ENCODE measurements at regions of chr13 and their contacts with region 1.

Region 1: DNA sequence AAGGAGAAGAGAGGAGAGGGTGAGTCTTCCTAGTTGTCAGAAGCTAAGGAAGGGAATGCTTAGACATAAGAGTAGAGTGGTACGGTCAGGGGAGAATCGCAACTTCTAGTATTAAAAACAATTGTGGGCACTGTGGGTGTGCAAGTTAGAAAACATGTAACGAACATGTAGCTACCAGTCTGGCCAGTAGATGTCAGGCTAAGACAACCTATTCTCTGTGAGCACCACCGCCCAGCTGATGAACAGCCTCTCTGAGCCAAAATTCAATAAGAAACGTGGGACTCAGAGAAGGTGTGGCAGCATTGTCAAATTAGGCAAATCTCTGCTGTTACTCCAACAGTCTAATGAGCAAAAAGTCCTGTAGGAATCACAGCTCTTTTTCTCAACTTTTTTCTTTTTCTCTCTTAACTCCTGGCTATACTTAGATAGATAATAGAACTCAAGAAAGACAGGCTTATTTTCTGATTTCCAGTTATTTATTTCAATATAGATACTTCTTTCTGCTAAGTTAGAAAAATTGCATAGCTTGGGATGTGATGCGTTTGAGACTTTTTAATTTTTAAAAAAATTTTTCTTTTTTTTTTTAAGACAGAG is 186.2 kb downstream of the USP12 start:
- DNase-seq: no peak
- H3K4me3 ChIP-seq: no peak overlapping the region
- H3K27ac ChIP-seq: no peak overlapping the region
- H3K4me1 ChIP-seq: peaks cover 0 to 26% (median 4%) of the 10 kb centered on the region in 6 donors
- H3K27me3 ChIP-seq: peaks cover 0 to 16% (median 0%) of the 10 kb centered on the region in 7 donors
- CTCF ChIP-seq: peak; percentile 57 to 93 (median 82)
- POLR2A ChIP-seq: no peak

Region 2: DNA sequence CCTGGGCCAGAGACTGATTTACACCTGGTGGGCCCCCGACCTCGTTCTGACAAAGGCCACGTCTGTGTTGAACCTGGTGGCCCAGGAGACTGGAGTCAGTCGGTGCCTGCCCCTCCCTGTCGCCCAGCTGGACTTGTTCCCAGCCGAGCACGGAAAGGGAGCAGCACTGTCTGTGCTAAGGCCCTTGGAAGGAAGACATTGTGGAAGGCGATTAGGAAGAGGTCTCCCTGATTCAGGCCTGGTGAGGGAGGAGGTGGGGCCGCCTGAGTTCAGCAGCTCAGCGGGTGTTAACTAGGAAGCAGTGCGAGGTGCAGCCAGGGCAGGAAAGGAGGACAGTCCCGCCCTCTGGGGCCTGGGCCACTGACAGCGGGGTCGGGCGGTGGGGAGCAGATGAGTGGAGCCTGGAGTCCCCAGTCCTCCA is 289.5 kb before region 1 on chr13:
- intact Hi-C with region 1: no loop called
- DNase-seq: no peak
- H3K4me3 ChIP-seq: no peak overlapping the region
- H3K27ac ChIP-seq: no peak overlapping the region
- H3K4me1 ChIP-seq: peaks cover 0 to 7% (median 6%) of the 10 kb centered on the region in 6 donors
- H3K27me3 ChIP-seq: no peaks in the 10 kb centered on the region
- CTCF ChIP-seq: no peak
- POLR2A ChIP-seq: no peak

Region 3: DNA sequence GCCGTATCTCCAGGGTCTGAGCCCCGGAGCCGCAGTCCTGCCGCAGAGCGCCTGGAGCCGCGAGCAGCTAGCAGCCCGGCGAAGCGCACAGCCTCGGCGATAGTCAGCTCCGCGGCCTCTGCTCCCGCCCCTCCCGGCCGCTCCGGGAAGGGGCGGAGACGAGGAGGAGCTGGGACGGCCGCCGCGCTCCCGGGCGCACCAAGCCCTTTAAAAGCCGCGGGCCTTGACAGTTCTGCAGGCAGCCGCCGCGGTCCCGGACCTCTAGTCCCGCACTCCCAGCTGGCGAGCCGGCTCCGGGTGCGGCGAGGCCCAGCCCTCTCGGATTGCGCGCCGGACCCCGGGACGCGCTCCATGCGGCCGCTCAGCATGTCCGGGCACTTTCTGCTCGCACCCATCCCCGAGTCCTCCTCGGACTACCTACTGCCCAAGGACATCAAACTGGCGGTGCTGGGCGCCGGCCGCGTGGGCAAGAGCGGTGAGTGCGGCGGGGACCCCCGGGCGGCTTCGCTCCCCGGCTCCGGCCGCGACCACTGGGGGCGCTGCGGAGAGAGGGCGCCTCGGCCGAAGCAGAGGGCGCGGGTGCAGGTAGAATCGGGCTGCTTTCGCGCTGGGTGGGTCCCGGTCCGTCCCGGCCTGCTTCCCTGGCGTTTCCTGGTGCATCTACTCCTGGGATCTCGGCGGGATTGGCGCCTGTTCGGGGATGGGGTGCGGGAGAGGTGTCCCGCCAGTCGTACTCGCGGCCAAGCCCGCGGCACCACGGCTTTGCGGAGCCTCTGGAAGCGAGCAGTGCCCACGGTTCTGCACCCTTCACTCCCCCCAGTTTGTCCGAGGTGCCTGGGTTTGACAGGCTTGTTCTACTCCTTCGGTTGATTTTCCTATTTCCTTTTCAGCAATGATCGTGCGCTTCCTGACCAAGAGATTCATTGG is 285.5 kb after region 1 on chr13 and contains the start of gene RASL11A:
- intact Hi-C with region 1: loop called (anchors 10 kb)
- DNase-seq: peak; percentile 95
- H3K4me3 ChIP-seq: peak within 1 kb of the TSS; percentile 79 to 97 (median 86)
- H3K27ac ChIP-seq: peak within 1 kb of the TSS; percentile 78 to 95 (median 92)
- H3K4me1 ChIP-seq: peaks cover 7 to 74% (median 33%) of the 10 kb centered on the region in 6 donors
- H3K27me3 ChIP-seq: peaks cover 0 to 7% (median 0%) of the 10 kb centered on the region in 7 donors
- CTCF ChIP-seq: peak; percentile 77 to 98 (median 95)
- POLR2A ChIP-seq: peak in 2 of 3 donors; percentile 42 to 82
- total RNA-seq, gene RASL11A: 9.2 to 37.9 (median 16.1) TPM

Region 4: DNA sequence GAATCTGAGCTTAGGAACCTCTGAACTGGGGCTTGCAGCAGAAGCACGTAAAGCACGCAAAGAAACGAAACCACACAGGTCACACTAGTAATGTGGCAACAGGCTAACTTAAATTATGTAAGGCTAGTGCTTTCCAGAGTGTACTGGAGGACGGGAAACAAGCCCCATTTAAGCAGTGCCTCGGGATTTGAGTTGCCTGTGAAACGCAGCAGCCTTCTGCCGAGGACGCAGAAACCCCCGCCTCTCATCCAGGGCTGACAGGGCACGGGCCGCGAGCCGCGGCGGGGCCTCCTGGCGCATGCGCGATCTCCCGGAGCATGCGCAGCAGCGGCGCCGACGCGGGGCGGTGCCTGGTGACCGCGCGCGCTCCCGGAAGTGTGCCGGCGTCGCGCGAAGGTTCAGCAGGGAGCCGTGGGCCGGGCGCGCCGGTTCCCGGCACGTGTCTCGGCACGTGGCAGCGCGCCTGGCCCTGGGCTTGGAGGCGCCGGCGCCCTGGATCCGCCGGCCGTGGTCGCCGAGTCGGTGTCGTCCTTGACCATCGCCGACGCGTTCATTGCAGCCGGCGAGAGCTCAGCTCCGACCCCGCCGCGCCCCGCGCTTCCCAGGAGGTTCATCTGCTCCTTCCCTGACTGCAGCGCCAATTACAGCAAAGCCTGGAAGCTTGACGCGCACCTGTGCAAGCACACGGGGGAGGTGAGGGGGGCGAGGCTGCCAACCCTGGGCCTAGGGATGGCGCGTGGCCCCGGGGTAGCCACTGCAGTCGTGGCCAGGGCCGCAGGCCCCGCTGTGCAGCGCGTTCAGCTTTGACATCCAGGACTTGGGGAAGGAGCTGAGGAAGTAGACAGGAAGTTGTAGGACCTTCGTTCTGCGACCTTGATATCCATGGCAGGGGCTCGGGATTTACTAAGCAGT is 439.1 kb after region 1 on chr13 and contains the start of gene GTF3A:
- intact Hi-C with region 1: no loop called
- DNase-seq: peak; percentile 96
- H3K4me3 ChIP-seq: peak within 1 kb of the TSS; percentile 72 to 97 (median 88)
- H3K27ac ChIP-seq: peak within 1 kb of the TSS; percentile 89 to 97 (median 92)
- H3K4me1 ChIP-seq: peaks cover 14 to 58% (median 49%) of the 10 kb centered on the region in 6 donors
- H3K27me3 ChIP-seq: no peaks in the 10 kb centered on the region
- CTCF ChIP-seq: peak in 2 of 11 experiments; percentile 11 to 25
- POLR2A ChIP-seq: peak in 2 of 3 donors; percentile 42 to 79
- total RNA-seq, gene GTF3A: 90.7 to 149 (median 105) TPM